Colonic mucosa (tissue), 4 donors: ENCODE measurements at regions of chr21 and their contacts with region 1.

Region 1: GRCh38 chr21:37267269-37268184 is at the start of gene VPS26C:
- DNase-seq: peak; percentile 99
- H3K4me3 ChIP-seq: peak within 1 kb of the TSS; percentile 81
- H3K27ac ChIP-seq: peak within 1 kb of the TSS; percentile 89
- H3K4me1 ChIP-seq: peaks cover 8% of the 10 kb centered on the region
- H3K27me3 ChIP-seq: no peaks in the 10 kb centered on the region
- CTCF ChIP-seq: no peak
- total RNA-seq, gene VPS26C: 48.1 to 60.7 TPM

Region 2: GRCh38 chr21:37072988-37073416 is 194.5 kb before region 1 on chr21 and contains the starts of genes PIGP and TTC3:
- intact Hi-C with region 1: no loop called
- DNase-seq: peak; percentile 95
- H3K4me3 ChIP-seq: peak within 1 kb of the TSS; percentile 85
- H3K27ac ChIP-seq: peak within 1 kb of the TSS; percentile 94
- H3K4me1 ChIP-seq: no peaks in the 10 kb centered on the region
- H3K27me3 ChIP-seq: no peaks in the 10 kb centered on the region
- CTCF ChIP-seq: no peak
- total RNA-seq, gene PIGP: 19.8 to 28.8 TPM
- total RNA-seq, gene TTC3: 85.8 to 125 TPM

Region 3: DNA sequence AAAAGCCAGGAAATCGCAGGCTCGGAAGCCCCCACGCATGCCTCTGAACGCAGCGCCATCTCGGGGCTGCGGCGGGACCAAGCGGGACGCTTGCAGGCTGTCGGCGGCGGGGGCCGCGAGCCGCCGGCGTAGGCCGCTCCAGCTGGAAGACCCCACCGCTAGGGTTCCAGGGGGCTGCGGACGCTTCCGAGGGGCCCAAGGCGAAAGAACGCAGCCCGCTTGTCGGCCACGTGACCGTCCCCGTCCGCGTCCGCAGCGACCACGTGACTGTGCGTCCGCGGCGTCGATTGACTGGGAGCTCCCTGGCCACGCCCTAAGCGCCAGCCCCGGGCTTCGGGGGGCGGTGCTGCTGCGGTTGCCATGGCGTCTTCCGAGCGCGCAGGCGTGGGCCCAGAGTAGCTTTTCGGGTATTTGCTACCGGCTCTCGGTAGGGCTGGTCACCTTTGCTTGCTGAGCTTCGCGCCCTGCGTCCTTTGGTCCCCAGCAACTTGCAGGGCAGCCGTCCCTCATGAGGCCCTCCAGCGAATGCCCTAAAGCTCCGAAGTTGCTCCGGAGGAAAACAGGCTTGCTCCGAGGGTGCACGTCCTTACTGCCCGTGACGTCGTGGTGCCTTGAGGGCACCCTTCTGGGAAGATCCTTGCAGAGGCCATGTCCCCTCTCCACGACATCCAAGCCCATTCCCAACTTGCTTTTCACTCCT is 296.3 kb after region 1 on chr21:
- intact Hi-C with region 1: loop called (anchors 10 kb)
- DNase-seq: peak; percentile 95
- H3K4me3 ChIP-seq: peak overlapping the region; percentile 68
- H3K27ac ChIP-seq: peak overlapping the region; percentile 69
- H3K4me1 ChIP-seq: no peaks in the 10 kb centered on the region
- H3K27me3 ChIP-seq: no peaks in the 10 kb centered on the region
- CTCF ChIP-seq: no peak